PC-9 (cell line): ENCODE measurements at regions of chr1 and their contacts with region 1.

Region 1: GRCh38 chr1:46030876-46031660 is 101.4 kb downstream of the PIK3R3 start:
- DNase-seq: no peak
- H3K4me3 ChIP-seq: no peak overlapping the region
- H3K27ac ChIP-seq: no peak overlapping the region
- H3K4me1 ChIP-seq: no peaks in the 10 kb centered on the region
- H3K27me3 ChIP-seq: no peaks in the 10 kb centered on the region
- CTCF ChIP-seq: no peak

Region 2: DNA sequence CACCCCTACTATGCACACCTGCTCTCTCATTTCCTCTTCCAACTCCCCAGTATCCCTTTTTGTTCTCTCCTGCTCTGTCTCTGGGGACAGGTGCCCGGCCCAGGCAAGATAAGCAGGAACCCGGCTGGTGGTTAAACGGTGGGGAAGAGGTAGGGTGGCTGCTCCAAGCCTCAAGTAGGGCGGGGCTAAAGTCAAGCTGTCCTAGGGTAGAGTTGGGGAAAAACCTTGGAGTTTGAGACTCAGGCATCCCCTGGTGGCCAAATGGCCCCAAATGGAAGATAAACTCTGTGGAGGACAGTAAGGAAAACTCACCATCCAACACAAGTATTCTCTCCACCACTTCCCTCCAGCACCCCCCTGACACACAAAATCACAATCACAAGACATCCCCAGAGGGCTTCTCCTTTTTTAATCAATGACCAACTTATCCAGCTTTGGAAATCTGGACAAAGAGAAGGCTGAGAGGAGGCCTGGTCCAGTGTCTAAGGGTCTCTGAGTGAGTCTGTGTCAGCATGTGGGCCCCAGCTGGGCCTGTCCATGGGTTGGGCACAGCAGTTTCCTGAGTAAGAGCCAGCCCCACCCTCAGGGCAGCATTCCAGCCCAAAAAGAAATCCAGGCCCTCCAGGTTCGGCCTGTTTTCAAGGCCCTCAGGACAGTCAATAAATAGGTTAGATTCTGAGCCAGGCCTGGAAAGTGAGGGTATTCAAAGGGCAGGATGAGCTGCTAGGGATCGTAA is 157.4 kb after region 1 on chr1:
- CTCF ChIA-PET with region 1: interaction called, 16 read pairs
- POLR2A ChIA-PET with region 1: no interaction called
- intact Hi-C with region 1: no loop called
- DNase-seq: peak in 1 of 2 experiments; percentile 74
- H3K4me3 ChIP-seq: no peak overlapping the region
- H3K27ac ChIP-seq: peak overlapping the region; percentile 53
- H3K4me1 ChIP-seq: peaks cover 49% of the 10 kb centered on the region
- H3K27me3 ChIP-seq: no peaks in the 10 kb centered on the region
- CTCF ChIP-seq: peak; percentile 27; the same call in 1 of the 2 replicates